CD8-positive, alpha-beta T cell (primary cell): ENCODE measurements at regions of chr9 and their contacts with region 1.

Region 1: GRCh38 chr9:4315582-4316215 is 15.8 kb upstream of the GLIS3 start:
- DNase-seq: peak; percentile 42 to 85 (median 72)
- ATAC-seq: peak; percentile 90
- H3K4me3 ChIP-seq: no peak overlapping the region
- H3K4me3 Mint-ChIP-seq: no peak overlapping the region
- H3K27ac ChIP-seq: no peak overlapping the region
- H3K27ac Mint-ChIP-seq: no peak overlapping the region
- H3K4me1 ChIP-seq: peaks cover 19% of the 10 kb centered on the region
- H3K4me1 Mint-ChIP-seq: peaks cover 19% of the 10 kb centered on the region
- H3K27me3 ChIP-seq: no peaks in the 10 kb centered on the region
- H3K27me3 Mint-ChIP-seq: peaks cover 5% of the 10 kb centered on the region
- CTCF ChIP-seq: peak; percentile 76

Region 2: DNA sequence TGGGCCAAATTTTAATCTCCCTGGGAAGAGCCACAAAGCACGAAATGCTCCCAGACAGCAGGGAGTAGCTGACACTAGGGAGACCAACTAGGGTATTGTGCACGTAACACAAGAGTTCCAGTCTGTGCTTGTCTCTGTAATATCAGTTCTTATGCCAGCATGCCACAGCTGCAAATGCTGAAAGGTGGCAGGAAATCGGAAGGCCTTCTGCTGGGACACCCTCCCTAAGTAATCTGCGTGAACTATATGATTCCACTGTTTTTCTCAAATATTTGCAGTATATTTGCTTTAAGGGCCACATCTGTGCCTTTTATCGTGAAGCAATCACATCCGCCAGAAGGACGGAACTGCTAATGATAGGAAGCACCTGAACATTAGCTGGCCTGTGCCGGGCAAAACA is 1681.5 kb before region 1 on chr9:
- CTCF ChIA-PET with region 1: no interaction called
- POLR2A ChIA-PET with region 1: no interaction called
- intact Hi-C with region 1: no loop called
- DNase-seq: no peak
- ATAC-seq: no peak
- H3K4me3 ChIP-seq: no peak overlapping the region
- H3K4me3 Mint-ChIP-seq: no peak overlapping the region
- H3K27ac ChIP-seq: no peak overlapping the region
- H3K27ac Mint-ChIP-seq: no peak overlapping the region
- H3K4me1 ChIP-seq: no peaks in the 10 kb centered on the region
- H3K4me1 Mint-ChIP-seq: no peaks in the 10 kb centered on the region
- H3K27me3 ChIP-seq: no peaks in the 10 kb centered on the region
- H3K27me3 Mint-ChIP-seq: no peaks in the 10 kb centered on the region
- CTCF ChIP-seq: no peak

Region 3: GRCh38 chr9:3719286-3719685 is 596.4 kb before region 1 on chr9:
- CTCF ChIA-PET with region 1: no interaction called
- POLR2A ChIA-PET with region 1: no interaction called
- intact Hi-C with region 1: loop called in 1 of 2 experiments (anchors 10 kb)
- DNase-seq: no peak
- ATAC-seq: no peak
- H3K4me3 ChIP-seq: no peak overlapping the region
- H3K4me3 Mint-ChIP-seq: no peak overlapping the region
- H3K27ac ChIP-seq: no peak overlapping the region
- H3K27ac Mint-ChIP-seq: no peak overlapping the region
- H3K4me1 ChIP-seq: no peaks in the 10 kb centered on the region
- H3K4me1 Mint-ChIP-seq: no peaks in the 10 kb centered on the region
- H3K27me3 ChIP-seq: no peaks in the 10 kb centered on the region
- H3K27me3 Mint-ChIP-seq: peaks cover 4% of the 10 kb centered on the region
- CTCF ChIP-seq: no peak

Region 4: GRCh38 chr9:3732077-3733038 is 583.3 kb before region 1 on chr9:
- CTCF ChIA-PET with region 1: no interaction called
- POLR2A ChIA-PET with region 1: no interaction called
- intact Hi-C with region 1: loop called (anchors 2 to 10 kb)
- DNase-seq: peak in 6 of 9 experiments; percentile 1 to 67 (median 18)
- ATAC-seq: peak; percentile 97
- H3K4me3 ChIP-seq: no peak overlapping the region
- H3K4me3 Mint-ChIP-seq: peak overlapping the region; percentile 42
- H3K27ac ChIP-seq: no peak overlapping the region
- H3K27ac Mint-ChIP-seq: no peak overlapping the region
- H3K4me1 ChIP-seq: no peaks in the 10 kb centered on the region
- H3K4me1 Mint-ChIP-seq: peaks cover 12% of the 10 kb centered on the region
- H3K27me3 ChIP-seq: no peaks in the 10 kb centered on the region
- H3K27me3 Mint-ChIP-seq: peaks cover 2% of the 10 kb centered on the region
- CTCF ChIP-seq: peak; percentile 52

Region 5: DNA sequence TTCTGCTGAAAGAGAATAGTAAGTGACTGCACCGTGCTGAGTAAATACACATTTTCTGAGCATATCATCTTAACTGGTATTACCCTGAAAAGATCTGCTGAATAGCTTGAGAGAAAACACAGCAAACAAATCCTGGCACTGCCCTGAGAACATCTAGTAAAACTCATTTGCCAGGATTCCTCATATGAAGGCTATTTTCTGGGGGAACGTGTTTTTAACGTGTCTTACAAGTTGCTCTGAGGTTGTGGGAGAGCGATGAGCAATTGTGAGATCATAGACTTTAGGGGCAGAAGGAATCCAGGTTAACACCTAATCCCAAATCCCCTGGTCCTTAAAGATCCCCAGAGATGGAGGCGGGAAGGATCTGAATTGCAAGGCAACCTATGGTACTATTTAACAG is 458.0 kb before region 1 on chr9:
- CTCF ChIA-PET with region 1: no interaction called
- POLR2A ChIA-PET with region 1: no interaction called
- intact Hi-C with region 1: no loop called
- DNase-seq: no peak
- ATAC-seq: no peak
- H3K4me3 ChIP-seq: no peak overlapping the region
- H3K4me3 Mint-ChIP-seq: no peak overlapping the region
- H3K27ac ChIP-seq: no peak overlapping the region
- H3K27ac Mint-ChIP-seq: no peak overlapping the region
- H3K4me1 ChIP-seq: no peaks in the 10 kb centered on the region
- H3K4me1 Mint-ChIP-seq: no peaks in the 10 kb centered on the region
- H3K27me3 ChIP-seq: no peaks in the 10 kb centered on the region
- H3K27me3 Mint-ChIP-seq: peaks cover 8% of the 10 kb centered on the region
- CTCF ChIP-seq: no peak

Region 6: DNA sequence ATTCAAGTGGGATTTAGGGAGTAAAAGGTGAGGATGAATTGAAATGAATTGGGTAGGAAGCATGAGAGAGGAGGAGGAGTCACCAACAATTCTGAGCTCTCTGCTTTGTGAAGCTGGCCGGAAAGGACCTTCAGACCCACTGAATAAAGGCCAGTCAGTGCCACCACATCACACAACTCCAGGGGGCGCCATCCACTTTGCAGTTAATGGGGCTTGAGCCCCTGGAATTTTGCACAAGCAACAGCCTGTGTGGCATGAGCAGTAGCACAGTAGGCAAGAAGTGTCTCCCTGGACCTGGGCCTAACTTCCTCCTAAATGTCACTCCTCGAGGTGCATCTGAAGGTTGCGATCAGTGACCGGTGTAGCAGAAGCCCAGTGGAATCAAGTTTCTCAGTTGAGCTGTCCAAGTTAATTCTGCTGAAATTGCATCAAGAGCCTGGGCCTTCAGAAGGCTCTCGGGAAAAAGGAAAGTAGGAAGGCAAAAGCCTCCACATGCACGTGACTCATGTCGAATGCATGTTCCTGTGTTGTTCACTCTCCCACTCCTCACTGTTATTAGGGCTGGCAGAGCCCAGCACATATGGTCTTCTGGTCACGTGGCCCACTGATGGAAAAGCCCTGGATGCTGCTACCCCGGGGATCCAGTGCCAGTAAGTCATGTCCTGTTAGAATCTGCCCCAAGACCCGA is 11.9 kb after region 1 on chr9:
- CTCF ChIA-PET with region 1: interaction called, 266 read pairs
- POLR2A ChIA-PET with region 1: interaction called, 3 read pairs
- intact Hi-C with region 1: no loop called
- DNase-seq: no peak
- ATAC-seq: no peak
- H3K4me3 ChIP-seq: no peak overlapping the region
- H3K4me3 Mint-ChIP-seq: no peak overlapping the region
- H3K27ac ChIP-seq: no peak overlapping the region
- H3K27ac Mint-ChIP-seq: no peak overlapping the region
- H3K4me1 ChIP-seq: peaks cover 44% of the 10 kb centered on the region
- H3K4me1 Mint-ChIP-seq: peaks cover 40% of the 10 kb centered on the region
- H3K27me3 ChIP-seq: no peaks in the 10 kb centered on the region
- H3K27me3 Mint-ChIP-seq: no peaks in the 10 kb centered on the region
- CTCF ChIP-seq: no peak

Region 7: DNA sequence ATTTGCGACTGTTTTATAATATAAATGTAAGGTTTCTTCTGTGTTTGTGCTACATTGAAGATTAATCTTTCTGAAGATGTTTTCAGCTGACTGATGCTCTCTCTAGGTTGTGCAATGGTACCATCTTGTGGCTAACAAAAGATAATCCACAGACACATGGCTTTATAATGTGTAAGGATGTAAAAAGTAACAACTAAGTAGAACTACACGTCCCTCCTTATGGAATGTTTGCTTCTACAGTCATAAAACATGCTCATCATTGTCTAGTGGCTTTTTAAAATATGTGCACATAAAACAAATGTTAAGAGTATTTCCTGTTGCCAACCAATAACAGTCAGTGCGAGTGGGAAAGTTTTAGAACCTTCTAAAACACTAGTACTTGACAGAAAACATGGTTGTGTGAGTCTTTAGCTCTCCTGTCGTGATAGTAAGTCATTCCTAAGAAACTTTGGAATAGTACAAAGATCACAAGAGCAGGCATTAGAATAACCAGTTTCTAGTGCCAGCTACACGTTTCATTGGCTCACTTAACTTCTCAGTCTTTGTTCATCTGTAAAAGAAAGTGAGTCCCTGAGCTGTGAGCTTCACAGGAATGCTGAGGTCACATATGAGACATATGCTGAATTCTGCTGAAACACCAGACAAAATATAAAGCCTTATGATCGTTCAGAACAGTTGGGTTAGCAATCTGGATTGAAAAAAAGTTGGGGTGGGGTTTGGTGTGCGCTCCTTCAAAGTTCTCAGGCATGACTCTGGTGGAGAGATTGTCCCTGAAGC is 59.9 kb after region 1 on chr9:
- CTCF ChIA-PET with region 1: interaction called, 114 read pairs
- POLR2A ChIA-PET with region 1: no interaction called
- intact Hi-C with region 1: loop called in 1 of 2 experiments (anchors 1 kb)
- DNase-seq: peak in 2 of 9 experiments; percentile 40 to 55
- ATAC-seq: peak; percentile 54
- H3K4me3 ChIP-seq: no peak overlapping the region
- H3K4me3 Mint-ChIP-seq: no peak overlapping the region
- H3K27ac ChIP-seq: no peak overlapping the region
- H3K27ac Mint-ChIP-seq: no peak overlapping the region
- H3K4me1 ChIP-seq: no peaks in the 10 kb centered on the region
- H3K4me1 Mint-ChIP-seq: no peaks in the 10 kb centered on the region
- H3K27me3 ChIP-seq: peaks cover 0 to 2% of the 10 kb centered on the region in 2 experiments
- H3K27me3 Mint-ChIP-seq: peaks cover 10% of the 10 kb centered on the region
- CTCF ChIP-seq: no peak